ENCODE measurements at regions of chr4 and their contacts with region 1.

Region 1: GRCh38 chr4:75724066-75724866 is at the start of gene USO1:
- DNase-seq: peak; percentile 95
- H3K4me3 ChIP-seq: peak within 1 kb of the TSS; percentile 71 to 94
- H3K27ac ChIP-seq: peak within 1 kb of the TSS; percentile 94 to 97
- H3K4me1 ChIP-seq: peaks cover 13 to 23% of the 10 kb centered on the region in 2 experiments; a peak in 3 of 4 replicates
- H3K27me3 ChIP-seq: no peaks in the 10 kb centered on the region
- CTCF ChIP-seq: peak; percentile 93
- EP300 ChIP-seq: no peak
- RAD21 ChIP-seq: peak; percentile 69
- polyA plus RNA-seq, gene USO1: 25.6 and 38.8 TPM in 2 replicates

Region 2: DNA sequence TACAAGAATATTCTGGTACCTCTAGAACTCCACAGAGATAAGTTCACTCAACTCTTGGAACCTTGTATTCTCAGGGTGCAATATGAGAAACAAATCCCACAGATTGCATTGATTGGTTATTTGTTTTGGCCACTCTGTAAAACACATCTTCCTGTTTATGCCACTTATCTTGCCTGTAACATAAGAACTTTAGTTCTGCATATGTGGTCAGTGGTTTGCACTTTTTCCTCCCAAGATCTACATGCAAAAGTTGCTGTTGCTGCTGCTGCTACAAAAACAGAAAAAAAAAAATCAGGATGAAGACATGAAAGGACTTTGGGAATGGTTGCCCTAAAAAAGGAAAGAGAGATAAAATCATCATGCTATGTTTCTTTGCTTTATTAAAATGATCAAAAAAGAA is 158.8 kb before region 1 on chr4:
- CTCF ChIA-PET with region 1: no interaction called
- POLR2A ChIA-PET with region 1: no interaction called
- DNase-seq: no peak
- H3K4me3 ChIP-seq: no peak overlapping the region
- H3K27ac ChIP-seq: no peak overlapping the region
- H3K4me1 ChIP-seq: no peaks in the 10 kb centered on the region
- H3K27me3 ChIP-seq: no peaks in the 10 kb centered on the region
- CTCF ChIP-seq: no peak
- EP300 ChIP-seq: no peak
- RAD21 ChIP-seq: no peak

Region 3: GRCh38 chr4:75644095-75644494 is 80.2 kb before region 1 on chr4:
- CTCF ChIA-PET with region 1: interaction called, 14 read pairs
- POLR2A ChIA-PET with region 1: no interaction called
- DNase-seq: no peak
- H3K4me3 ChIP-seq: no peak overlapping the region
- H3K27ac ChIP-seq: no peak overlapping the region
- H3K4me1 ChIP-seq: no peaks in the 10 kb centered on the region
- H3K27me3 ChIP-seq: no peaks in the 10 kb centered on the region
- CTCF ChIP-seq: no peak
- EP300 ChIP-seq: no peak
- RAD21 ChIP-seq: no peak

Region 4: DNA sequence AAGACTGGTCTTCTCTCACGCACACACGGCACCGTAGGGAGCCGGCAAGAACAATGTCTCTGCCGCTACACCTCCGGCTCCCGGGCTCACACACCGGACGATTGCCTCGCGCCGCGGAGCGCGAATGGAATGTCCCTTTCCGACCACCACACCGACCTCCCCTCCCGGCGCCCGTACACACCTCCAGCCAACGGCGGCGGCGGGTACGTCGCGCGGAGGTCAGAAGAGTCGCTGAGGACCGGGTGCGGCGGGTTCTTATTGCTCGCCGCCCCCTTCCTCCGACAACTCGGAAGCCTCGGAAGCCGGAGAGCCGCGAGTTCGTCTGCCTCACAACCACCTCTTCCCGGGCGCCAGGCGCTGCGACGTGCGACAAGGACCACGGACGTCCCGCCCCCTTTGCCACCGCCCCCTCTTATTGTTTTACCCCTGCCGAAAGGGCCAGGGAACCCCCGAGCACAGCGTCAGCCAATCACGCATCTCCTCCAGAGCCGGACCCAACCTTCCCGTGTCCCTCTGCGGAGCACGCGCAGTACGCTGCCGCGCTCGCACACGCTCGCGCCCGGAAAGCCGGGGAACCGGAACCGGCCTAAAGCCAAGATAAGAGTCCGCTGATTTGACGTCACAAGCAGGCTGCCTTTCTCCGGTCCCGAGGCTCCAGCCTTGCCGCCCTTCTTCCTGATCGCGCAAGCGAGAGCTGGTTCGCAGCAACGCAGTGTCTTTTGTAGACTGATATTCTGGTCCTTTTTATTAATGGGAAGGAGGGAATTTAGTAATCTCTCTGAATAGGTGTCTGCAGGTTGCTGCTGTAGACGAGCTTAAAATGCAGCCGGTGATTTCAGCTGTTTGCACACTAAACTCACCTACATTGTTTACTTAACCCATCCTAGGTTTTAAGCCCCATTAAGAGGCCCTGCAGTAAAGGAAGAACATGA is 51.0 kb before region 1 on chr4 and contains the start of gene G3BP2:
- CTCF ChIA-PET with region 1: interaction called, 45 read pairs
- POLR2A ChIA-PET with region 1: interaction called, 24 read pairs
- DNase-seq: peak; percentile 98
- H3K4me3 ChIP-seq: peak within 1 kb of the TSS; percentile 76 to 99
- H3K27ac ChIP-seq: peak within 1 kb of the TSS; percentile 87 to 98
- H3K4me1 ChIP-seq: peaks cover 0 to 5% of the 10 kb centered on the region in 2 experiments; a peak in 2 of 4 replicates
- H3K27me3 ChIP-seq: no peaks in the 10 kb centered on the region
- CTCF ChIP-seq: no peak
- EP300 ChIP-seq: no peak; a peak in 1 of 4 replicates
- RAD21 ChIP-seq: no peak; the same call in none of the 2 replicates
- polyA plus RNA-seq, gene G3BP2: 35.9 and 50.1 TPM in 2 replicates

Region 5: DNA sequence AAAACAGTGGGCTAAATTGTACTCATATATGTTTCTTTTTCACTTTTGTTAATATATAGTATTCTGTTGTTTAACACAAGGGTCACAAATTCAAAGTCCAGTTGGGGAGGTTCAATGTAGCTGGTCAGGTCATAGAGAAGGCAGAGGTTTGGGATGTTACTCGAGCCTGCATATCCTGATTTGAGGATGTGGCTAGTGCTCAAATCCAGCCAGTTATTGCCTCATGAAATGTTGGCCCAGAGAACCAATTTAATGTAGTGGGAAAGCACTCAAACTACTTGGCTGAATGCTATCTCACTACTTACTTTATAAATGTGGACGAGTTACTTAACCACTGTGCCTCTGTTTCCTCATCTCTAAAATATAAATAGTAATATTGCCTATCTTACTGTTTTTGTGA is 12.6 kb after region 1 on chr4:
- CTCF ChIA-PET with region 1: interaction called, 14 read pairs
- POLR2A ChIA-PET with region 1: interaction called, 5 read pairs
- DNase-seq: no peak
- H3K4me3 ChIP-seq: no peak overlapping the region
- H3K27ac ChIP-seq: no peak overlapping the region
- H3K4me1 ChIP-seq: no peaks in the 10 kb centered on the region
- H3K27me3 ChIP-seq: no peaks in the 10 kb centered on the region
- CTCF ChIP-seq: no peak
- EP300 ChIP-seq: no peak
- RAD21 ChIP-seq: no peak

Region 6: GRCh38 chr4:76226418-76226817 is 502.2 kb after region 1 on chr4:
- CTCF ChIA-PET with region 1: no interaction called
- POLR2A ChIA-PET with region 1: no interaction called
- DNase-seq: no peak
- H3K4me3 ChIP-seq: no peak overlapping the region
- H3K27ac ChIP-seq: no peak overlapping the region
- H3K4me1 ChIP-seq: no peaks in the 10 kb centered on the region
- H3K27me3 ChIP-seq: no peaks in the 10 kb centered on the region
- CTCF ChIP-seq: no peak
- EP300 ChIP-seq: no peak
- RAD21 ChIP-seq: no peak

Measured in SK-N-SH (cell line).